ENCODE measurements at regions of chr6 and their contacts with region 1.

Region 1: DNA sequence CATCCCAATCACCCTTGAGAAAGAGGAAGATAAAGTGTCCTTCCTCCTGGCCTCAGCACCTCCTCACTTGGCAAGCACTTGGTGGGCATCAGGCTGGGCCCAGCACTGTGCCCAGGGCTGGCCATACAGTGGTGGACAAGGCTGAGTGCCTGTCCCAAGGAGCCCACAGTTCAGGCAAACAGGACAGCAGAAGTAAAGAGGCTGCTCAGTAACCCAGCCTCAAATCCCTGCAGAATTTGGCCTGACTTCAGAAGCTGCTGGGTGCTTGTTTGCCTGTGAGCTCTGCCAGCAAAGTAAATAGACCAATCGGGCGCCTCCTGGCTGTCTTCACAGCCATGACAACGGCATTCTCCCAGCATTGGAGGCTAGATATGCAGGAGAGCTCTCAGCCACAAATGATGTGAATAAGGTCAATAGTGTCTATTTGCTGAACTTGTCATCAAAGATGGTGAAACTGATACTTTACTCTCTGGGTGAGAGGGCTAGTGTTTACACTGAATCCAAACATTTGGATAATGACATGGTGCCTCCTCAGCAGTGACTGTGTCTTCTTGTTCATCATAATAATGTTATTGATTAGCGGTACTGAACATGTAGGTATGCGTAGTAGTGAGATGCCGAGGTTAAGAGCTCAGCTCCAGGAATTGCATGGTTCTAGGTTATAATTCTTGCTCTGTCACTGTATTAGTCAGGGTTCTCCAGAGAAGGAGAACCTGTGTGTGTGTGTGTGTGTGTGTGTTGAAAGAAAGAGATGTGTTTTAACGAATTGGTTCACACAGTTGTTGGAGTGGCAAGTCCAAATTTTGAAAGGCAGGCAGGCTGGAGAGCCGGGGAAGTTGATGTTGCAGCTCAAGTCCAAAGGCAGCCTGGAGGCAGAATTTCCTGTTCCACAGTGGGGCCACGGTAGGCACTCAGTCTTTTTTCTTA is 36.8 kb upstream of the FANCE start:
- DNase-seq: no peak

Region 2: DNA sequence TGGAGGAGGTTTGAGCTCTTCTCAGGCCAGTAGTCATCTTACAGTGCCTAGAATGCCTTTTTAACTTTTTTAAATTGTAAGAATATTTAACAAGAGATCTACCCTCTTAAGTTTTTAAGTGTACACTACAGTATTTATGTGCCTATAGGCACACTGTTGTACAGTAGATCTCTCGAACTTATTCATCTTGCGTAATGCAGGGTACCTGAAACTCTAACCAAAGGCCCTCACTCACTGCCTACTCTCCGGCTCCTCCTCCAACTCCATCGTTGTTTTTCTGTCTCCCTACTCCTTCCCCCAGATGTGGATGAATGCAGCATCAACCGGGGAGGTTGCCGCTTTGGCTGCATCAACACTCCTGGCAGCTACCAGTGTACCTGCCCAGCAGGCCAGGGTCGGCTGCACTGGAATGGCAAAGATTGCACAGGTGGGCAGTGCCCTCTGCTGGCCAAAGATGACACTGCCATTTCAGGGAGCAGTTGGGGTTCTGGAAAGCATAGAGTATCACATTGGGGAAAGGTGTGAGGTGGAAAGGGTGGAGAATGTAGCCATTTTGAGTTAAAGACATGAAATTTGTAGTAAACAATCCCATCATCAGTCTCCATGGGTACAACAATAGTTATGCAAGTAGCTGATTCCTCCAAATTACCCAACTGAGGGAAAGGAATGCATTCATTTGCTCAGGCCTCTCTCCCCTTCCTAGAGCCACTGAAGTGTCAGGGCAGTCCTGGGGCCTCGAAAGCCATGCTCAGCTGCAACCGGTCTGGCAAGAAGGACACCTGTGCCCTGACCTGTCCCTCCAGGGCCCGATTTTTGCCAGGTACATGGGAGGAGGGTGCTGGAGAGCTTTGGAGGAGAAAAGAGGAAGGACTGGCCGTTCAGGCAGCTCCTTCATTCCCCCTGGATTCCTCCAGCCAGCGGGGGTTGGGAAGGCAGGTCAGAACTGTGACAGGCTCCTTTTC is 174.2 kb before region 1 on chr6:
- intact Hi-C with region 1: no loop called
- DNase-seq: peak; percentile 86

Region 3: DNA sequence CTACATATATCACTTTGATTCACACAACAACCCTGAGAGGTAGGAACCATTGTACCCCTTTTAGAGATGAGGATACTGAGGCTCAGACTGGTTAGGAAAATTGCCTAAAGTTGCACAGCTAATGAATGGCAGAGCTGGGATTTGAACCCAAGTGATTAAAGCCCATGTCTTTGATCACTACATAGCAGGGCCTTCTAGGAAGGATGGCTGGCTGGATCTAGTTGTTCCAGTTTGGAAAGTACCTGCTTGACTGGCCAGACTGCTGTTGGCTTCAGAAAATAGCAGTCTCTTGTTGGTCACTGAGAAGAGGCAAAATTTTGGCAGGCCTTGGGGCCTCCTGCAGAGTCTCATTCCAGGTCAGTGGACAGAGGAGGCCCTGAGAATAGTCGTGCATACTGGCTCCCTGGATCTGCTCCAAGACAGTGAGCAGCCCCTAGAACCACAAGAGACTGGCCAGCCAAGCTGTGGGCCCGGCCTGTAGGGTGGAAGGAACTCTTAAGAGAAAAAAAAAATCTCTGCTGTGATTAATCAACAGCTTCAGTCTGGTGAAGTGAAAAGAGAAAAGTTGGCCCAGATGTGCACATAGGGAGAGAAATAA is 55.5 kb before region 1 on chr6:
- intact Hi-C with region 1: loop called (anchors 5 kb)
- DNase-seq: peak; percentile 76

Measured in cardiac septum (tissue), 1 donor.